Astrocyte of the cerebellum (primary cell): ENCODE measurements at regions of chr5 and their contacts with region 1.

Region 1: GRCh38 chr5:179994583-179995323 is 76.8 kb downstream of the RNF130 start:
- DNase-seq: no peak
- H3K4me3 ChIP-seq: no peak overlapping the region
- CTCF ChIP-seq: no peak

Region 2: GRCh38 chr5:180079702-180080466 is 85.1 kb after region 1 on chr5:
- in situ Hi-C with region 1: loop called (anchors 5 kb)
- DNase-seq: no peak
- H3K4me3 ChIP-seq: no peak overlapping the region
- CTCF ChIP-seq: no peak